Right cardiac atrium (tissue), 5 donors: ENCODE measurements at regions of chr19 and their contacts with region 1.

Region 1: GRCh38 chr19:41531438-41532311 is 44.3 kb upstream of the CEACAM21 start:
- DNase-seq: peak; percentile 80 to 89 (median 87)
- ATAC-seq: peak; percentile 95 to 96
- H3K4me3 ChIP-seq: peak overlapping the region; percentile 4
- H3K27ac ChIP-seq: peak overlapping the region; percentile 61
- H3K4me1 ChIP-seq: peaks cover 2% of the 10 kb centered on the region
- H3K27me3 ChIP-seq: no peaks in the 10 kb centered on the region

Region 2: DNA sequence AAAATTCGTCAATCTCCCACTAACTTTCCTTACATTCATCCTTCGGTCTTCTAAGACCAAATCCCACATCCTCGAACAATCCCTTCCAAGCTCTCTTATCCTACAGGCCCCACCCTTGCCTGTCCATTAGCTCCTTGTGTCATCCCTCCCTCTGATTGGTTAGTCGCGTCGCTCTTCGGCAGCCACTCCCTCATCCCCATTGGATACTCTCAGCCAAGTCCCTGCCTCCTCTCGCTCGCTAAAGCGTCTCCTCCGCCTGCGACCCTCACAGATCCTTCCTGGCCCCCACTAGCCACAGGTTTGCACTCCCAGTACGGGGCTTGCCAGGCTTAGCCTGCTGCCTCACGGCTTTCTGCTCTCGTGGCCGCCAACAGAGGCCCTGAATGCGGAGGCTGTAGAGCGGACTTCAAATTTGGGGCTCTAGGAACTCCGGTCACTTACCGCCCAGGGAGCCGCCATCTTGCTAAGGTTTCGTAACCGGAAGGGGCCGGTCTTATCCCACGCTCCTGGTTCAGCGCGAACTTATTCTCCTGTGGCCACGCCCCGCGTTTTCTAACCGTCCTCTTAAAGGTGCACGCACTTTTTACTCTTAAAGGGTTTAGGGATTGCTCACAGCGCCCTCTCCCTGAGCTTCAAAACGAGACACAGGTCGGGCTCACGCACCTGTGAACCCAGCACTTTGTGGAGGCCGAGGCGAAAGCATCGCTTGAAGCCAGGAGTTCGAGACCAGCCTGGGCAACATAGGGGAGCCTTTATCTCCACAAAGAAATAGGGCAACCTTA is 92.0 kb before region 1 on chr19 and contains the start of gene DMAC2:
- intact Hi-C with region 1: no loop called
- DNase-seq: peak; percentile 97 to 98 (median 98)
- ATAC-seq: peak; percentile 98
- H3K4me3 ChIP-seq: peak within 1 kb of the TSS; percentile 89
- H3K27ac ChIP-seq: peak within 1 kb of the TSS; percentile 99
- H3K4me1 ChIP-seq: no peaks in the 10 kb centered on the region
- H3K27me3 ChIP-seq: no peaks in the 10 kb centered on the region
- total RNA-seq, gene DMAC2: 52.6 to 86.8 (median 77.5) TPM

Region 3: GRCh38 chr19:41457241-41457640 is 74.4 kb before region 1 on chr19:
- intact Hi-C with region 1: loop called in 1 of 4 experiments (anchors 10 kb)
- DNase-seq: no peak
- ATAC-seq: peak in 1 of 2 donors; percentile 47
- H3K4me3 ChIP-seq: no peak overlapping the region
- H3K27ac ChIP-seq: no peak overlapping the region
- H3K4me1 ChIP-seq: peaks cover 2% of the 10 kb centered on the region
- H3K27me3 ChIP-seq: no peaks in the 10 kb centered on the region